Sigmoid colon (tissue), 7 donors: ENCODE measurements at regions of chr19 and their contacts with region 1.

Region 1: DNA sequence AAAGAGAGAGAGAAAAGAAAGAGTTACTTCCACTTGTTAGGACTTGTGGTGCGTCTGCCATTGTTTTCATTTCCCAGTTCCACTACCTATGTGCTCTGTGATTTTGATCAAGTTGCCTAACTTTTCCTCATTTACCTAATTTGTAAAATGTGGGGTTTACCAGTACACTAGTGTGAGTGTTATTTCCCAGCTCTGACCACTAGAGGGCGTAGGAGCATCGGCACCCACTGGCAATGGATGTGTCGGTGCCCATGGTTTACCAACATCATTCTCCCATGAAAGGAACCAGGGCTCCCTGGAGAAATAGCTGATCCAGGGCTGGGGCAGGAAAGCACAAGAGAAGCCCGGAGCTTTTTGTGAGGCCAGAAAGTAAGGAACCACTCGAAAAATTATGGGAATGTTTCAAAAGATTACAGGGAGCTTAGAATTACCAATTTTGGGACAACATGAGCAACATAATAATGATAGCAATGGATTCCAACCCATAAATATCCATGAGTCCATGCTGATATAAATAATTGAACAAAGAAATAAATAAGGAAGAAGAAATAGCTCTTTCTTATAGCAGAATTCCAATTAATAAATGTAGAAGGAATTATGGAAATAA is 15.1 kb upstream of the CEACAM4 start:
- DNase-seq: no peak
- H3K4me3 ChIP-seq: no peak overlapping the region
- H3K27ac ChIP-seq: no peak overlapping the region
- H3K4me1 ChIP-seq: no peaks in the 10 kb centered on the region
- H3K27me3 ChIP-seq: peaks cover 0 to 18% (median 9%) of the 10 kb centered on the region in 3 donors
- CTCF ChIP-seq: peak; percentile 37 to 83 (median 70)
- EP300 ChIP-seq: no peak
- POLR2A ChIP-seq: no peak

Region 2: DNA sequence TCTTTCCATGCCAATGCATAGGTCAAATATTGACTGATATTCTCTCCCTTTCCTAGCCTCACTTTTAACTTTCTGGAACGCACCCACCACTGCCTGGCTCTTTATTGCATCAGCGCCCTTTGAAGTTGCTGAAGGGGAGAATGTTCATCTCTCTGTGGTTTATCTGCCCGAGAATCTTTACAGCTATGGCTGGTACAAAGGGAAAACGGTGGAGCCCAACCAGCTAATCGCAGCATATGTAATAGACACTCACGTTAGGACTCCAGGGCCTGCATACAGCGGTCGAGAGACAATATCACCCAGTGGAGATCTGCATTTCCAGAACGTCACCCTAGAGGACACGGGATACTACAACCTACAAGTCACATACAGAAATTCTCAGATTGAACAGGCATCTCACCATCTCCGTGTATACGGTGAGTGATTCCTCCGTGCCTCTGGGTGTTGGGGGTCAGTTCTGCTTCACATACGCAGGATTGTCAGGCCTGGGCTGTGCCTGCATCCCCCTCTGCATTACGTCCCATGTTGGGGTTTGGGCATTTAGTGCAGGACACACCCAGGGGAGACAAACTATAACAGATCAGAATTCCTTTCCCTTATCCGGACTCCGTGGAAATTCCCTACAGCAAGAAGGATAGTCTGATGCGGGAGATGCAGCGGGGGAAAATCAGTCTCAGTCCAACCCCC is 64.7 kb before region 1 on chr19:
- intact Hi-C with region 1: no loop called
- DNase-seq: no peak
- H3K4me3 ChIP-seq: no peak overlapping the region
- H3K27ac ChIP-seq: no peak overlapping the region
- H3K4me1 ChIP-seq: no peaks in the 10 kb centered on the region
- H3K27me3 ChIP-seq: peaks cover 0 to 6% (median 0%) of the 10 kb centered on the region in 3 donors
- CTCF ChIP-seq: no peak
- EP300 ChIP-seq: no peak
- POLR2A ChIP-seq: no peak

Region 3: GRCh38 chr19:41746593-41747227 is 104.7 kb after region 1 on chr19:
- intact Hi-C with region 1: loop called (anchors 2 kb)
- DNase-seq: no peak
- H3K4me3 ChIP-seq: no peak overlapping the region
- H3K27ac ChIP-seq: no peak overlapping the region
- H3K4me1 ChIP-seq: peaks cover 0 to 14% (median 6%) of the 10 kb centered on the region in 4 donors
- H3K27me3 ChIP-seq: peaks cover 0 to 20% (median 0%) of the 10 kb centered on the region in 3 donors
- CTCF ChIP-seq: peak in 3 of 4 experiments; percentile 26 to 52 (median 45)
- EP300 ChIP-seq: no peak
- POLR2A ChIP-seq: no peak